Head of caudate nucleus (tissue), 42 donors: ENCODE measurements at regions of chr3 and their contacts with region 1.

Region 1: GRCh38 chr3:160565442-160566403 is at the start of gene KPNA4:
- DNase-seq: peak; percentile 92 to 99 (median 98)

Region 2: DNA sequence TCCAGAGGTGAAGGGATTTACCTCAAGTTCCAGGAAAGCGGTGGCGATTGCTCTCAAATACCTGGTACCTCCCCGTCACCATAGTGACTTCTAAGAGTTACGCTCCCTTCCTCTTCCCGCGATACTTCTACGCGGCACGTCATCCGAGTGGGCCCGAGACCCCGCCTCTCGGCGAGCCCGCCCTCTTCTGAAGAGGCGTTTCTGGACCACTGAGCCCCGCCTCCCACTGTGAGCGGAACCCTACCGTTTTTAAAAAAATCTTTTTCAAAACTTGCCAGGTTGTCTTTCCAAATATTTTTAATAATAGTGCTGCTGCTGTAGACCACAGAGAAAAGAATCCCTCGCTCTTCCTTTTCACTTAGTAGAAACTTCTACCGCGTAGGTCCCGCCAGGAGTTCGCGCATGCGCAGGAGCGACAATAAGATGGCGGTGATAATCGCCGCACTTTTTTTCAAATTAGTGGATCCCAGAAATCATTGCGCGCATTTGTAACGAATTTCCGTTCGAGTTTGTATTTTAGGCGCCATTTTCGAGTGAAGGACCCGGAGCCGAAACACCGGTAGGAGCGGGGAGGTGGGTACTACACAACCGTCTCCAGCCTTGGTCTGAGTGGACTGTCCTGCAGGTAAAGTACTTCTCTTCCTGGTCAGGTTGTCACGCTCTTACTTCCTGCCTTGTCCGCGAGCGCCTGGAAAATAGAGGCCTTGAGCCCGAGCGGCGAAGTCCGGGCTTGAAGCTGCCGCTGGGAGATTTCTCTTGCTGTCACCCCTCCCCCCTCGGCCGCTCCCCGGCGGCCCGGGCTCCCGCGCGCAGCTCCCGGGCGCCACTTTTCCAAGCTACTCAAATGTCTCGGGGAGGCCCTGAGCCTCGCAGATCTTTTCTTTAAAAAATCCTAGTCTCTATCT is 166.3 kb before region 1 on chr3 and contains the starts of genes IFT80 and SMC4:
- intact Hi-C with region 1: loop called (anchors 10 kb)
- DNase-seq: peak; percentile 90 to 98 (median 96)

Region 3: DNA sequence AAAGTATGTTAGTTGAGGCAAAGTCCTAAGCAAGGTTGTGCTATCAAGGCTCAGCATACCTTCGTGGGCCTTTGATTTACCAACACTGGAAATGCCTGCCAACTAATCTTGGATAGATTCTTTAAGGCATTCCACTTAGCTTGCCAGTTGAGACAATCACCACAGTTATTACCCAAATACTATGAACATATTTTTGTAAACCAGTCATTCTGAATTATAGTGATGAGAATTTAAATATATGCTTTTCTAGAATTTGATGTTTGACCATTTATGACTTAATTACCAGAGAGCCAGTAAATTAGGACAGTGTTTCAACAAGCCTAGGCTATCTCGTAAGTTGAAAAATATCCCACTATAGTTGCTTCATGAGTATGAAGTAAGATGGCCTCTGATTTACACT is 131.7 kb before region 1 on chr3:
- intact Hi-C with region 1: no loop called
- DNase-seq: no peak